HepG2 (cell line): ENCODE measurements at regions of chr16 and their contacts with region 1.

Region 1: GRCh38 chr16:51055434-51055833 is 95.6 kb downstream of the SALL1 start:
- DNase-seq: no peak
- ATAC-seq: no peak
- H3K4me3 ChIP-seq: no peak overlapping the region
- H3K27ac ChIP-seq: no peak overlapping the region
- H3K4me1 ChIP-seq: peaks cover 86% of the 10 kb centered on the region
- H3K27me3 ChIP-seq: no peaks in the 10 kb centered on the region
- CTCF ChIP-seq: no peak
- EP300 ChIP-seq: no peak
- POLR2A ChIP-seq: no peak
- RAD21 ChIP-seq: no peak

Region 2: DNA sequence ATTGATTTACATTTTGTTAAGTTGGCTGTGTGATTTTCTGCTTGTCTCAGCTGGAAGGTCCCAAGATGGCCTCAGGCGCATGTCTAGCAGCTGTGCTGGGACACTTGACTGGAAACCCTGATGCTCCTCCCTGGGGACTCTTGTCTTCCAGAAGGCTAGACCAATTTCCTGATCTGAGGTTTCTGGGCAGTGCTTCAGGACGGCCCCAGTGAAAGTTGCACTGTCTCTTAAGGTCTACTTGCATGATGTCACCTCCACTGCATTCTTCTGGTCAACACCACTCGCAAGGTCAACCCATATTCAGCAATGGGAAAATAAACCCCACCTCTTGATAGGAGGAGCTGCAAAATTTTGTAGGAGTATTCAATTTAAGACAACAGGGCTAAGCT is 20.3 kb before region 1 on chr16:
- CTCF ChIA-PET with region 1: no interaction called
- POLR2A ChIA-PET with region 1: no interaction called
- in situ Hi-C with region 1: no loop called
- intact Hi-C with region 1: no loop called
- DNase-seq: no peak
- ATAC-seq: no peak
- H3K4me3 ChIP-seq: no peak overlapping the region
- H3K27ac ChIP-seq: no peak overlapping the region
- H3K4me1 ChIP-seq: no peaks in the 10 kb centered on the region
- H3K27me3 ChIP-seq: no peaks in the 10 kb centered on the region
- CTCF ChIP-seq: no peak
- EP300 ChIP-seq: no peak
- POLR2A ChIP-seq: no peak
- RAD21 ChIP-seq: no peak

Region 3: DNA sequence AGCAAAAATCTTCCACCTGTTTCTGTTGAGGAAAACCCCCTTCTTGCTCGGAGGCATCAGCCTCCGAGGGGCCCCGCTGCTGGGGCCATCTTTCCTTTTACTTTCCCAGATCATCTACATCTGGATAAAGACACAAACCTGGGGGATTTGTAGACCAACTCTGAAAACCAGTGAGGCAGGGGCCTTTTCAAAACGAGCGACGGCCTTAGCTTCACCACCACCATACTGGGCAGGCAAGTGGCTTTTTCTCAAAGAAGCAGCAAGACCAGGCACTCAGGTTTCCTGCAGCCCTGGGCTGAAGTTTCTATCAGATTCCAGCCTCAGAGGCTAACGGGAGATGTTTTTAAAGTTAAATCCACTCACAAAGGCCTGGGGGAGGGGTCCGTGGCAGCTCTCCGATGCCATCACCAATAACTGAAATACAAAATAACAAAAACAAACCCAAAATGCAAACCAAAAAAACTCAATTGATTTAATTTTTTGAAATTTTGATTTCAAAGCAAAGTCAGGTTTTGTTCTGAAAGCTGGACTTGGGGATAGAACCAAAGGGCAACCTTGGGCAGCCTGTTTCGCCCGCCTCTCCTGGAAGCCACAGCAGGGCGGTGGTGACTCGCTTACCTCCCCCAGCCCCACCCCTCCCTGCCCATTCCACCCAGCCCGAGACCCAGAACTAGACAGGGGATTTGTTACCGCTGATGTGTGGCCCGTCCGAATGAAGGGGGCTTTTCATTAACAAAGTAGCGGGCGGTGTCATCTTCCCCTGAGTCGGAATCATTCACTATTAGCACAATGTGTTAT is 39.8 kb after region 1 on chr16:
- CTCF ChIA-PET with region 1: no interaction called
- POLR2A ChIA-PET with region 1: interaction called, 11 read pairs
- in situ Hi-C with region 1: no loop called
- intact Hi-C with region 1: no loop called
- DNase-seq: peak; percentile 29
- ATAC-seq: peak; percentile 88
- H3K4me3 ChIP-seq: peak overlapping the region; percentile 42 to 56 (median 48)
- H3K27ac ChIP-seq: peak overlapping the region; percentile 49
- H3K4me1 ChIP-seq: peaks cover 42% of the 10 kb centered on the region
- H3K27me3 ChIP-seq: no peaks in the 10 kb centered on the region
- CTCF ChIP-seq: peak; percentile 44
- EP300 ChIP-seq: no peak
- POLR2A ChIP-seq: no peak
- RAD21 ChIP-seq: no peak

Region 4: GRCh38 chr16:51119556-51119955 is 64.1 kb after region 1 on chr16:
- CTCF ChIA-PET with region 1: no interaction called
- POLR2A ChIA-PET with region 1: interaction called, 16 read pairs
- in situ Hi-C with region 1: no loop called
- intact Hi-C with region 1: loop called (anchors 2 kb)
- DNase-seq: no peak
- ATAC-seq: peak; percentile 21
- H3K4me3 ChIP-seq: peak overlapping the region; percentile 49 to 57 (median 52)
- H3K27ac ChIP-seq: peak overlapping the region; percentile 94
- H3K4me1 ChIP-seq: peaks cover 87% of the 10 kb centered on the region
- H3K27me3 ChIP-seq: no peaks in the 10 kb centered on the region
- CTCF ChIP-seq: peak; percentile 44
- EP300 ChIP-seq: no peak
- POLR2A ChIP-seq: no peak
- RAD21 ChIP-seq: no peak

Region 5: GRCh38 chr16:51184702-51185433 is 129.4 kb after region 1 on chr16:
- CTCF ChIA-PET with region 1: no interaction called
- POLR2A ChIA-PET with region 1: no interaction called
- in situ Hi-C with region 1: no loop called
- intact Hi-C with region 1: no loop called
- DNase-seq: no peak
- ATAC-seq: no peak
- H3K4me3 ChIP-seq: no peak overlapping the region
- H3K27ac ChIP-seq: no peak overlapping the region
- H3K4me1 ChIP-seq: peaks cover 9% of the 10 kb centered on the region; the same call in 1 of the 2 replicates
- H3K27me3 ChIP-seq: peaks cover 0 to 1% of the 10 kb centered on the region in 2 experiments; a peak in 1 of 5 replicates
- CTCF ChIP-seq: no peak
- EP300 ChIP-seq: no peak
- POLR2A ChIP-seq: no peak
- RAD21 ChIP-seq: no peak

Region 6: DNA sequence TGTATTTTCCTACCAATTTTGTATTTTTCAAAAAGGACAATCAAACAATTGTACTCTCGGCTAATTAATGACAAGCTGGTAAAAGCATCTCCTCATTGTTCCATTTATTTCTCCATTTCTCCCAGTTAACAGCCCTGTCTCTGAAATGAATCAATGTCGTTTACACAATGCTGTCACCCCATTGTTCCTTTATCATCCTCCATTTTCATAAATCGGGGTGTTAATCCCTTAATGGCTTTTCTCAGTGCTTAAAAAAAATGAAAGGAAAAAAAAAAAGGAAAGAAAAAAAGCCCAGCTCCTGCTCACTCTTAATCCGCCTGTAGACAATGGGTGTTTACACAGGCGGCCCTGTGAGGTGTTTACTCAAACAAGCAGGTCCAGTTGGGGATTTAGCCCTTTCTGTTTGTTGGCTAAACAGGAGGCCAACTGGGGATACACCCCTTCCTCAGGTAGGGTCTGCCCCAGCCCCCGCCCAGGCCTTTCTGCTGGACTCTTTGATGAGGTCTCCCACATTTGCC is 182.5 kb after region 1 on chr16:
- CTCF ChIA-PET with region 1: no interaction called
- POLR2A ChIA-PET with region 1: no interaction called
- in situ Hi-C with region 1: no loop called
- intact Hi-C with region 1: loop called (anchors 5 kb)
- DNase-seq: peak; percentile 43
- ATAC-seq: peak; percentile 20; the same call in 1 of the 3 replicates
- H3K4me3 ChIP-seq: no peak overlapping the region
- H3K27ac ChIP-seq: no peak overlapping the region
- H3K4me1 ChIP-seq: peaks cover 42% of the 10 kb centered on the region
- H3K27me3 ChIP-seq: peaks cover 0 to 13% of the 10 kb centered on the region in 2 experiments; a peak in 2 of 5 replicates
- CTCF ChIP-seq: no peak
- EP300 ChIP-seq: peak in 1 of 2 experiments; percentile 70; a peak in 2 of 4 replicates
- POLR2A ChIP-seq: no peak
- RAD21 ChIP-seq: no peak

Region 7: DNA sequence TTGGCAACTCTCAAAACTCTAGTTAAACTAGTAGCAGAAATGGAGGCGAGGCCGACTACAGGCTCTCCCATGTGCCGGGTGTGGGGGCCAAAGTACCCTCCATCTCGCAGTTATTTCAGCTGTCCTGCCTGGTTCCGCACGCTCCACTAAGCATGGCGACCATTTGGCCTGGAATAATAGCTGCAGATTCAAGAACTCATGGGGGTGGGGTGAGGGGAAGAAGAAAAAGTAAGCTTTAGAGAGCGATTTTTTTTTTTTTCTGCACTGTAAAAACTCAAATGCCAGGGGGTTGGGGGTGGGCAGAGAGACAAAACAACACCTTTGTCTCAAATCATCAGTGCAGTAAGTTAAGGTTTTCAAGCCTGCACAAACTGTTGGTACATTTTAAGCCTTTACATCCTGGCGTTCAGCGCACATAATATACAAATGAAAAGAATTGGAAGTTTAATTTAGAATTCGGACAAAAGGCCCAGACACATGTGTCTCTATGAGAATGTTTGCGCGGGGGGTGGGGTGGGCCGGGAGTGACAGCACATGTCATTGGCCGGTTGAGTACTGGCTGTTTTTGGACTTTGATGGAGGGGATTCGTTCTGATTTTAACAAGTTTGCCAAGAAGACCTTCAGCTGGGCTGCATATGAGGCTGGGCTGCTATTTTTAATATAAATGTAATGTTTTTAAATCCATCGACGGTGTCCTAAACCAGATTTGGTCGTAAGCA is 790.3 kb after region 1 on chr16:
- CTCF ChIA-PET with region 1: no interaction called
- POLR2A ChIA-PET with region 1: no interaction called
- in situ Hi-C with region 1: no loop called
- intact Hi-C with region 1: no loop called
- DNase-seq: no peak
- ATAC-seq: no peak
- H3K4me3 ChIP-seq: no peak overlapping the region
- H3K27ac ChIP-seq: no peak overlapping the region
- H3K4me1 ChIP-seq: no peaks in the 10 kb centered on the region
- H3K27me3 ChIP-seq: no peaks in the 10 kb centered on the region
- CTCF ChIP-seq: no peak
- EP300 ChIP-seq: no peak
- POLR2A ChIP-seq: no peak
- RAD21 ChIP-seq: no peak